Activated naive CD4-positive, alpha-beta T cell treated with anti-CD3 and anti-CD28 coated beads, Interleukin-2, amount 10 ng/mL, durations not matched to agents 7 days and 5 days (primary cell): ENCODE measurements at regions of chr9 and their contacts with region 1.

Region 1: GRCh38 chr9:78369639-78370219 is 72.8 kb downstream of the PSAT1 start:
- DNase-seq: peak; percentile 69
- H3K4me3 Mint-ChIP-seq: no peak overlapping the region
- H3K27ac Mint-ChIP-seq: no peak overlapping the region
- H3K4me1 Mint-ChIP-seq: no peaks in the 10 kb centered on the region
- H3K27me3 Mint-ChIP-seq: peaks cover 14% of the 10 kb centered on the region

Region 2: DNA sequence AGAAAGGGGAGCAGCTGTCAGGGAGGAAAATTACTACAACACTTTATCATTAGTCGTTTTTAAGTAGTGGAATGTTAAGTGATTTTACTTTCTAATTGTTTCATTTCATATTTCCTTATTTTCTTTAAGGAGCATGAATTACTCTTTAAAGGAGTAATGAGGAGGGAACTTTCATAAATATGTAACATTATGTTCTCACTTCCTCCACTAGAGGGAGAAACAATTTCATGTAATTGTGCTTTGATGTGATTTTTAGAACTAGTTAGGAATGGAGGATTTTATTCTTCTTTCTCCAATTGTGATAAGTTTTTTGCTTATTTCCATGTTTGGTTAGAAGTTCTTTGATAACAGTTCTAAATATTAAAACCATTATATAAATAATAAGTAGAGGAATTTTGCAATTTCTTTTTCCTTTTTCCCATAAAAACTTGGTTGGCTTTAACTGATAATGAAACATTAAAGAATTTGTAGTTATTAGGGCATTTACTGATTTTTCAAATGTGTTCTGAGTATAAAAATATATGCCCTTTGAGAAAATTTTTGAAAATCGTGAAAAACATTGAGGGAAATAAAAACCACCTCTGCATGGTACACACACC is 108.2 kb before region 1 on chr9:
- CTCF ChIA-PET with region 1: interaction called, 67 read pairs
- DNase-seq: no peak
- H3K4me3 Mint-ChIP-seq: no peak overlapping the region
- H3K27ac Mint-ChIP-seq: no peak overlapping the region
- H3K4me1 Mint-ChIP-seq: no peaks in the 10 kb centered on the region
- H3K27me3 Mint-ChIP-seq: no peaks in the 10 kb centered on the region

Region 3: GRCh38 chr9:78357165-78357873 is 12.4 kb before region 1 on chr9:
- CTCF ChIA-PET with region 1: interaction called, 12 read pairs
- DNase-seq: no peak
- H3K4me3 Mint-ChIP-seq: no peak overlapping the region
- H3K27ac Mint-ChIP-seq: no peak overlapping the region
- H3K4me1 Mint-ChIP-seq: peaks cover 7% of the 10 kb centered on the region
- H3K27me3 Mint-ChIP-seq: no peaks in the 10 kb centered on the region

Region 4: GRCh38 chr9:78439190-78439865 is 69.6 kb after region 1 on chr9:
- CTCF ChIA-PET with region 1: no interaction called
- DNase-seq: peak; percentile 72
- H3K4me3 Mint-ChIP-seq: no peak overlapping the region
- H3K27ac Mint-ChIP-seq: no peak overlapping the region
- H3K4me1 Mint-ChIP-seq: peaks cover 3% of the 10 kb centered on the region
- H3K27me3 Mint-ChIP-seq: peaks cover 17% of the 10 kb centered on the region